ENCODE measurements at regions of chr12 and their contacts with region 1.

Region 1: DNA sequence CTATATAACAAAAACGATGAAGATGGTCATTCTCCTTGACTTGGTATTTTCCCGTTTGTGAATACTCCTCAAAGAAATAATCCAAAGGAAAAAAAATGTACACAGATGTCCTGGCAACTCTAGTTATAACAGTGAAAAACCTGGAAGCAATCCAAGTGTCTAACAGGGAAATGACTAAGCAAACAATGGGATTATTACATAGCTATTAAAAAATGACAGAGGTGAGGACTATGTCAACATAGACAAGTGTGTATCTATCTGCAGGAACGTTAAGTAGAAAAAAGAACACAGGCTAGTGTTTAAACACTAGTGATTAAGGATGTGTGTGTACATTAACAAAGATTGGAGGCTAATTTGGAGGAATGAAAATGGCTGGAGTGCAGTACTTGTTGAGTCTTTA is 5.9 kb upstream of the APOLD1 start:
- DNase-seq: peak in 1 of 2 experiments; percentile 92
- H3K4me3 ChIP-seq: no peak overlapping the region
- H3K27ac ChIP-seq: peak overlapping the region; percentile 37
- H3K4me1 ChIP-seq: peaks cover 44% of the 10 kb centered on the region
- H3K27me3 ChIP-seq: no peaks in the 10 kb centered on the region
- CTCF ChIP-seq: no peak

Region 2: GRCh38 chr12:12334367-12335040 is 445.0 kb before region 1 on chr12:
- CTCF ChIA-PET with region 1: no interaction called
- POLR2A ChIA-PET with region 1: no interaction called
- intact Hi-C with region 1: no loop called
- DNase-seq: peak in 1 of 2 experiments; percentile 57
- H3K4me3 ChIP-seq: no peak overlapping the region
- H3K27ac ChIP-seq: no peak overlapping the region
- H3K4me1 ChIP-seq: peaks cover 44% of the 10 kb centered on the region
- H3K27me3 ChIP-seq: no peaks in the 10 kb centered on the region
- CTCF ChIP-seq: peak; percentile 89

Region 3: DNA sequence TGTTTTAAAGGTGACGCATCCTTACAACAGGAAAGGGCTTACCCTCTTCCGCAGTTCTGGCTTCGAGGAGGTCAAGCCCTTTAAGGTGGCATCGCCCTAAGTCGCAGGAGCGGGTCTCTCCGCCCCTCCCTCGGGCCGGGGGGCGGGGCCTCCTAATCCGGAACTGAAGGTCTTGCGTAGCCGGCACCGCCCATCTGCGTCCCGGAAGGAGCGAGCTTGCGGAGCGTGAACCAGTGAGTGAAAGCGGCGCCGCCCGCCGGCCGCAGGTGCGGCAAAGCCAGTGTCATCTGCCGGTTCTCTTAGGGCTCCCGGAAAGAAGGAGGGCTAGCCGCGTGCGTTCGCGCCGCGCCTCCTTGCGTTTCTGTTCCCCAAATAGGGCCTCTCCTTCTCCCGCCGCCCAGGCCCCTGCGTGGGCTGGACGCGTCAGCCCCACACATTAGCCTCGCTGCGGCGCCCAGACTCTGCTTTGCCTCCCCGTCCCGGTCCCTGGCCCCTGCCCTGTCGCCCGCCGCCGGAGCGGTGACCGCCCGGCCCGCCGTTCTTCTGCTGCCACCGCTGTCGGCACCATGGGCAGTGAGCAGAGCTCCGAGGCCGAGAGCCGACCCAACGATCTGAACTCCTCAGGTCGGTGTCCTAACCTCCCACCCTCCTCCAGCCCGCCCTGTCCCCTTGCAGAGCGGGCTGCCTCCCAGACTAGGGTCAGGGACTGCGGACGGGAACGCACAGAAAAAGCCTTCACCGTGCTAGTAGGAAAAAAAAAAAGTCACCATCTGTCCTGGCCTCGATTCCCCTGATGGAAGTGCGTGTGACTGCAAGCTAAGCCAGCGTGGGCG is 422.4 kb before region 1 on chr12 and contains the start of gene BORCS5:
- CTCF ChIA-PET with region 1: no interaction called
- POLR2A ChIA-PET with region 1: interaction called, 11 read pairs
- intact Hi-C with region 1: no loop called
- DNase-seq: peak; percentile 94 to 99
- H3K4me3 ChIP-seq: peak within 1 kb of the TSS; percentile 70
- H3K27ac ChIP-seq: peak within 1 kb of the TSS; percentile 73
- H3K4me1 ChIP-seq: peaks cover 19% of the 10 kb centered on the region
- H3K27me3 ChIP-seq: no peaks in the 10 kb centered on the region
- CTCF ChIP-seq: no peak
- total RNA-seq, gene BORCS5: 18.2 and 19.7 TPM in 2 replicates

Region 4: DNA sequence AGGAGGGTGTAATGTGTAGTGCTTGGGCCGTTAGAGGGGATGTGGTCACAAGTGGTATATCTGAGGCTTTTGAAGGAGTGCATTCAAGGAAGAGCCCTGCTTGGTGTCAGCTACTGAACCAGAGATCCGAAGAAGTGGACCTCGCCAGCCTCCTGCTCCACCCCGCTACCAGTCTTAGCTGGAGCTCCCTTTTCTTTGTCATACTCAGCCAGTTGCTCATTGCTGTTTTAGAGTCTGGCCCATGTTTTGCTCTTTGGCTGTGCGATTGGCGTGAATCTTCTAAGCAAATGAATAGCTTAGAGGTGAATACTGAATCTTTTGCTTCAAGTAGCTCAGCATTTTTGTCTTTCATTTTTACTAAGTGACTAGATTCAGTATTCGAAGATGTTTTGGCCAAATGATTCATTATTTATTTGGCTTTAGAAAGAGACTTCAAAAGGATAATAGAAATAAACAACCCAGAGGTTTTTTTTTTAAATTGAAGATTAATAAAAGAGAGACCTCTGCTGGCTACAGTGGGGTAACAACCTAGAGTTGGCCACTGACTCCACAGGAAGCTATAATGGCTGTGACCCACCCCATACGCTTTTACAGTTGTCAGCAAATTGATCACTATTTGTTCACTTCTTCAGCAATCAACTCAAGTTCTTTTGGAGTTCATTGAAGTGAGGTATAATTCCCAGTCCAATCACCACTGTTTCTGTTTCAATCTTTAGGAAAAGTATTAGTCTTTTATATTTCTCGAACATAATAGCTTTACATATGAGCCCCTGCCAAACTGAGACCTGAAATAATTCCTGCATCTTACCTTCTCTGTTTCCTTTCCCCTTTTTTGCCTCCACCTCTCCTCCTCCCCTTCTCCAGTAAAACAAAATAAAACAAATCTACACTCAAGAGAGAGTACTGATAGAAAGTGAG is 42.5 kb before region 1 on chr12:
- CTCF ChIA-PET with region 1: interaction called, 8 read pairs
- POLR2A ChIA-PET with region 1: interaction called, 10 read pairs
- intact Hi-C with region 1: no loop called
- DNase-seq: no peak
- H3K4me3 ChIP-seq: no peak overlapping the region
- H3K27ac ChIP-seq: no peak overlapping the region
- H3K4me1 ChIP-seq: peaks cover 16% of the 10 kb centered on the region; the same call in 1 of the 2 replicates
- H3K27me3 ChIP-seq: no peaks in the 10 kb centered on the region
- CTCF ChIP-seq: peak; percentile 70

Region 5: GRCh38 chr12:12759234-12759915 is 20.2 kb before region 1 on chr12:
- CTCF ChIA-PET with region 1: interaction called, 7 read pairs
- POLR2A ChIA-PET with region 1: interaction called, 3 read pairs
- intact Hi-C with region 1: loop called (anchors 2 kb)
- DNase-seq: no peak
- H3K4me3 ChIP-seq: no peak overlapping the region
- H3K27ac ChIP-seq: peak overlapping the region; percentile 87
- H3K4me1 ChIP-seq: peaks cover 27% of the 10 kb centered on the region
- H3K27me3 ChIP-seq: no peaks in the 10 kb centered on the region
- CTCF ChIP-seq: no peak

Region 6: GRCh38 chr12:12899530-12900380 is 120.2 kb after region 1 on chr12:
- CTCF ChIA-PET with region 1: no interaction called
- POLR2A ChIA-PET with region 1: interaction called, 11 read pairs
- intact Hi-C with region 1: no loop called
- DNase-seq: peak in 1 of 2 experiments; percentile 65
- H3K4me3 ChIP-seq: peak overlapping the region; percentile 17; the same call in 1 of the 2 replicates
- H3K27ac ChIP-seq: peak overlapping the region; percentile 76
- H3K4me1 ChIP-seq: peaks cover 89% of the 10 kb centered on the region
- H3K27me3 ChIP-seq: no peaks in the 10 kb centered on the region
- CTCF ChIP-seq: no peak